ENCODE measurements at regions of chr6 and their contacts with region 1.

Region 1: GRCh38 chr6:129748212-129748900 is 38.4 kb upstream of the ARHGAP18 start:
- DNase-seq: peak; percentile 81
- H3K4me3 Mint-ChIP-seq: peak overlapping the region; percentile 46
- H3K27ac Mint-ChIP-seq: peak overlapping the region; percentile 93
- H3K4me1 Mint-ChIP-seq: peaks cover 68% of the 10 kb centered on the region
- H3K27me3 Mint-ChIP-seq: no peaks in the 10 kb centered on the region

Region 2: GRCh38 chr6:129448965-129449364 is 299.4 kb before region 1 on chr6:
- CTCF ChIA-PET with region 1: no interaction called
- intact Hi-C with region 1: loop called (anchors 5 kb)
- DNase-seq: no peak
- H3K4me3 Mint-ChIP-seq: no peak overlapping the region
- H3K27ac Mint-ChIP-seq: peak overlapping the region; percentile 37
- H3K4me1 Mint-ChIP-seq: peaks cover 80% of the 10 kb centered on the region
- H3K27me3 Mint-ChIP-seq: no peaks in the 10 kb centered on the region

Region 3: GRCh38 chr6:129598244-129599187 is 149.8 kb before region 1 on chr6:
- CTCF ChIA-PET with region 1: interaction called, 3 read pairs
- intact Hi-C with region 1: loop called (anchors 1 kb)
- DNase-seq: no peak
- H3K4me3 Mint-ChIP-seq: no peak overlapping the region
- H3K27ac Mint-ChIP-seq: no peak overlapping the region
- H3K4me1 Mint-ChIP-seq: no peaks in the 10 kb centered on the region
- H3K27me3 Mint-ChIP-seq: no peaks in the 10 kb centered on the region

Region 4: GRCh38 chr6:129709769-129710449 is 38.4 kb before region 1 on chr6 and contains the start of gene ARHGAP18:
- CTCF ChIA-PET with region 1: interaction called, 6 read pairs
- intact Hi-C with region 1: loop called (anchors 2 kb)
- DNase-seq: peak; percentile 81
- H3K4me3 Mint-ChIP-seq: peak within 1 kb of the TSS; percentile 90
- H3K27ac Mint-ChIP-seq: peak within 1 kb of the TSS; percentile 51
- H3K4me1 Mint-ChIP-seq: peaks cover 16% of the 10 kb centered on the region
- H3K27me3 Mint-ChIP-seq: peaks cover 3% of the 10 kb centered on the region
- total RNA-seq, gene ARHGAP18: 3.2 to 3.7 TPM

Region 5: DNA sequence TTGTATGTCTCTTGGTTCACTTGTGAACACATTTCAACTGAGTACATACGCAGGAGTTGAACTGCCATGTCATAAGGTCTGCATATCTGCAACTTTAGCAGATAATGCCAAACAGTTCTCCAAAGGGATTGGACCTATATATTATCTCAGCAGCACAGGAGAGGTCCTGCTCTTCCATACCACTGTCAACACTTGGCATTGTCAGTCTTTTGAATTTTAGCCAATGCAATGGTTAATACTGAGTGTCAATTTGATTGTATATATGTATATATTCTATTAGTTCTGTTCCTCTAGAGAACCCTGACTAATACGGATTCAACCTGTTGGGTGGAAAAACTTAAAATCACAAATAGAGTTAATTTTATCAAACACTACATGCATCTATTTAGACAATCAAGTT is 12.3 kb before region 1 on chr6:
- CTCF ChIA-PET with region 1: interaction called, 6 read pairs
- intact Hi-C with region 1: loop called (anchors 1 kb)
- DNase-seq: no peak
- H3K4me3 Mint-ChIP-seq: no peak overlapping the region
- H3K27ac Mint-ChIP-seq: no peak overlapping the region
- H3K4me1 Mint-ChIP-seq: peaks cover 5% of the 10 kb centered on the region
- H3K27me3 Mint-ChIP-seq: no peaks in the 10 kb centered on the region

Region 6: GRCh38 chr6:129812145-129812777 is 63.9 kb after region 1 on chr6:
- CTCF ChIA-PET with region 1: no interaction called
- intact Hi-C with region 1: no loop called
- DNase-seq: no peak
- H3K4me3 Mint-ChIP-seq: no peak overlapping the region
- H3K27ac Mint-ChIP-seq: no peak overlapping the region
- H3K4me1 Mint-ChIP-seq: no peaks in the 10 kb centered on the region
- H3K27me3 Mint-ChIP-seq: peaks cover under 1% of the 10 kb centered on the region

Region 7: GRCh38 chr6:130020907-130021629 is 272.7 kb after region 1 on chr6:
- CTCF ChIA-PET with region 1: interaction called, 4 read pairs
- intact Hi-C with region 1: loop called (anchors 1 kb)
- DNase-seq: peak; percentile 90
- H3K4me3 Mint-ChIP-seq: peak overlapping the region; percentile 92
- H3K27ac Mint-ChIP-seq: peak overlapping the region; percentile 84
- H3K4me1 Mint-ChIP-seq: peaks cover 29% of the 10 kb centered on the region
- H3K27me3 Mint-ChIP-seq: no peaks in the 10 kb centered on the region

Region 8: DNA sequence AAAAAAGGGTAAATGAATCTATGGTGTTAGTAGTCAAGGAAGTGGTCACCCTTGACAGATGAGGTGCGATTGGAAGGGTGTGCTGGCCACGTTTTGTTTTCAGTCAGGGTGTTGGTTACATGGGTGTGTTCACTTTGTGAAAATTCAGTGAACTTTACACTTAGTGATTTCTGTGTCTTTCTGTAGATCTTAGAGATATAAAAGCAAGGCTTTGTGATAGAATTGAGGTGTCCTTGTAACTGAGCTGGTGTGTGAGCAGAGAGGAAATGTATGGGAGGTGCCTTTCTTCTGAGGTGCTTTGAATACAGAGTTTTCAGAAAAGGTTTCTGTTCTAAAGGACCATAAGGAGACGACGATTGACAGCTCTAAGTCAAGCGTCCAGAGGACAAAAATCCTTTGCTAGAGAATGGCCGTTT is 383.9 kb after region 1 on chr6:
- CTCF ChIA-PET with region 1: no interaction called
- intact Hi-C with region 1: loop called (anchors 5 kb)
- DNase-seq: peak; percentile 69
- H3K4me3 Mint-ChIP-seq: peak overlapping the region; percentile 65
- H3K27ac Mint-ChIP-seq: peak overlapping the region; percentile 85
- H3K4me1 Mint-ChIP-seq: peaks cover 59% of the 10 kb centered on the region
- H3K27me3 Mint-ChIP-seq: no peaks in the 10 kb centered on the region

Measured in activated naive CD4-positive, alpha-beta T cell treated with anti-CD3 and anti-CD28 coated beads for 36 hours (primary cell).